ENCODE measurements at regions of chr11 and their contacts with region 1.

Region 1: DNA sequence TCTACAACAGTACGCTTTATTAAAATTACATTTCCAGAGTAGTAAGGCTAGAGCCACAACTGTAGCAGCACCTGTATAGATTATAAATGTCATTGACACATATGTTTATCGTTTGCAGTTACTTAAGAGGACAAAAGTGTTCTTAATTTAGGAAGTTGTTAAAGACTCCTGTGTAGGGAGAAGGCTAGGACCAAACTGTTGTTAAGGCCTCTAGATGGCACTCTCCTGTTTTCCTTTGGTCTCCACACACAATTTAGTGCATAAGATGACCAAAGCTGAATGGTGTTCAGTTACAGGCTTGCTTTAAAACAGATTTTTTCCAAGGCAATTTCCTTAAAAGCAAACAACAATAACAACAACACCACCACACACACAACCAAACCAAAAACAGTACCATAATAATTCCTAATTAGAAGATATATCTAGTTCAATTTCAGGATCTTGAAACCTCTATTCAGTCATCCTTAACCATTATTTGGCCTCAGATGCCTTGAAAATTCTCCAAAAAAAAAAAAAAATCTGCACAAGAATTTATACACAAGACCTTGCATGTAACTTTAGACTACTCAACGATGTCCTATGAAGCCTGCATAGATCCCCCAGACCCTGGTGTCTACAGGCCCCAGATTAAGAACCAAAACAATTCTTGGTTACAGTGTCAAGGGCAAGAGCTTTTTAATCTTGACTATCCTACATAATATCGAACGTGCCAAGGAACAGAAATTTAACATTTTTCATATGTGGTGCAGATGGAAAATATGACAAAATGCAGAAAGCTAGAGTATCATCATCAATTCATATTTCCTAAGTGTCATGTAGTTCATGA is 42.6 kb upstream of the APOA1 start:
- DNase-seq: no peak
- H3K4me3 ChIP-seq: no peak overlapping the region
- H3K27ac ChIP-seq: no peak overlapping the region
- H3K4me1 ChIP-seq: no peaks in the 10 kb centered on the region
- H3K27me3 ChIP-seq: no peaks in the 10 kb centered on the region
- CTCF ChIP-seq: peak; percentile 43 to 69 (median 59)

Region 2: DNA sequence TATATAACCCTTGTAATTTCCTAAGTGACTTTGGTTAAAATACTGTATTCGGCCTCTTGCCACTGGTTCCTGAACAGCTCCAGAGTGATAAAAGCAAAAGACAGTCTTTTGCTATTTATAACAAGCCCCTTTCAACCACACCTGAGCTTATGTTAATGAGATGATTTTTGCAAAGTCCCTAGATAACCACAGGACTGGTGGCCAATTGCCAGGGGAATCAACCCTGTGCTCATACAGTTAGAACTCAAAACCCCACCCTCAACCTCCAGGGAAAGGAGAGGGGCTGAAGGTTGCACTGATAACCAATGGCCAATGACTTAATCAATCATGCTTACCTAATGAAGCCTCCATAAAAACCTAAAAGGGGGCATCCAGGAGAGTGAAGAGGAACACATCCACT is 140.3 kb after region 1 on chr11:
- intact Hi-C with region 1: no loop called
- DNase-seq: no peak
- H3K4me3 ChIP-seq: no peak overlapping the region
- H3K27ac ChIP-seq: no peak overlapping the region
- H3K4me1 ChIP-seq: no peaks in the 10 kb centered on the region
- H3K27me3 ChIP-seq: no peaks in the 10 kb centered on the region
- CTCF ChIP-seq: no peak

Region 3: DNA sequence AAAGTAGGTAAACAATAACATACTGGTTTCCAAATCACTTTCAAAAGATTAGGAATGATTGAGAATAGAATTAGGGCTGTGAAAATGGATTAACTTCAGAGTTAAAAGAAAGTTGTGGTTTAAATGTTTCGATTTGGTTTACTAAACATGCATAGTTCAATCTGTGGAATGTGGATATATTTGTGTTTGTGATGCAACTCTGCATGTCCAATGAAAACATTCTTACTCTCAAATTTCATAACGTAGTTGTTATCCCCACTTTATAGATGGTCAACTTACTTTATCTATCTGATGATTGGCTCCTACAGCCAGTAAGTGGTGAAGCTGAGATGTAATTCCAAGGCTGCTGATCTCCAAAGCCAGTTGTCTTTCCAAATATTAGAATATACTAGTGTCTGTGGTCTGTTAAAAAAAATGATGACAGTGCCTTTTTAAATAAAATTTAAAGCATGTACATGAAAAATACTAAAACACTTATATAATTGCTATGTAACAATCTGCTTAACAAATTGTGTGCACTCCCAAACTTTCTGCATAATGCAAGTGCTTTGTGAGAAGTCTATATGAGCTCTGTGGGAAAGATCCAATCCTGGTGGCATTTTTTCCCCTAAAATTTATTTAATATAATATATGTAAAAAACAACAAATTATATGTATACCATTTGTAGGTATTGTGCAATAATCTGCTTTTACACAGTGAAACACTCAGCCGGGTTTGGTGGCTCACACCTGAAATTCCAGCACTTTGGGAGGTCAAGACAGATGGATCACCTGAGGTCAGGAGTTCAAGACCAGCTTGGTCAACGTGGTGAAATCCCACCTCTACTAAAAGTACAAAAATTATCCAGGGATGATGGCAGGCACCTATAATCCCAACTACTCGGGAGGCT is 227.9 kb after region 1 on chr11:
- intact Hi-C with region 1: loop called (anchors 1 kb)
- DNase-seq: no peak
- H3K4me3 ChIP-seq: no peak overlapping the region
- H3K27ac ChIP-seq: no peak overlapping the region
- H3K4me1 ChIP-seq: no peaks in the 10 kb centered on the region
- H3K27me3 ChIP-seq: no peaks in the 10 kb centered on the region
- CTCF ChIP-seq: no peak

Region 4: DNA sequence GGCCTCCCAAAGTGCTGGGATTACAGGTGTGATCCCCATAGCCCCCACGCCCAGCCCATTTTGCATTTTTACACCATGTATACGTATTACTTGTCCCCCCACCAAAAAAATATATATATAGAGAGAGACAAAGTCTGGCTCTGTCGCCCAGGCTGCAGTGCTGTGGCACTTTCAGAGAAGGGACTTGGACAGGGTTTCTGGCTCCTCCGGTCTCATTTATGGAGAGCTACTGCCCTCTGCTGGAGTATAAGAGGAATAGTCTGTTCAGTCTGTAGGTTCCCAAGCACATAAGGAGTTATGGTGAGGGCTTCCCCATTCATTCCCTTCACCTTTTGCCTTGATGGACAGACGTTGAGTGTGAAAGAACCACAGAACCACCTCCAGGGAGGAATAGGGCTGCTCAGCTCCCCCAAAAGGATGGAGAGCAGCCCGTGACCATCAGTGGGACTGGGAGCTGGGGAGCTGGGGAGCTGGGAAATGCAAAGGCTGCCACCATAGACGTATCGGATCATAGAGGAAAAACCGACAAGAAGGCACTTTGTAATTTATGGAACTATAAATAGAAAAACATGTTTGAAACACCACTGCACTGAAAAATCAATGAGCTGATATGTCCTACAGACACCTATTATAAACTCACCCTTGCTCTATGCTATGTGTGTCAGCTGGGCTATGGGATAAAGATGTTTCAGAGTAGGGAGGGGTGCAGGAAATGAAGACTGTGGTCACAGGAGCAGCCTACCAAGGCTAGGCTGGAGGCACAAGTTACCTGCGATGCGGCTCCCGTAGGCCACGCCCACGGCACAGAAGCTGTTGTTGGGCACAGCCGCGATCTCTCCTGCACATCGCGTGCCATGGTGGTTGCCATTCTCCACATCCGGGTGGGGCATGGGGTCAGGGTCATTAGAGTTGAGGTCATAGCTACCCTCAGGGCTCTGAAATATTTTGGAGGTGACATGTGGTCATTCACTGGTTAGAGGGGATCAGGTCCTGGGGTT is 346.7 kb after region 1 on chr11:
- intact Hi-C with region 1: loop called (anchors 5 kb)
- DNase-seq: peak in 1 of 2 donors; percentile 71
- H3K4me3 ChIP-seq: no peak overlapping the region
- H3K27ac ChIP-seq: peak overlapping the region in 1 of 2 donors; percentile 16
- H3K4me1 ChIP-seq: peaks cover 7 to 19% of the 10 kb centered on the region in 2 donors
- H3K27me3 ChIP-seq: no peaks in the 10 kb centered on the region
- CTCF ChIP-seq: peak; percentile 71 to 87 (median 83)